Naive thymus-derived CD4-positive, alpha-beta T cell (primary cell): ENCODE measurements at regions of chrX and their contacts with region 1.

Region 1: GRCh38 chrX:129798888-129799287 is 19.1 kb downstream of the SASH3 start:
- DNase-seq: no peak
- ATAC-seq: peak; percentile 61
- H3K4me3 ChIP-seq: no peak overlapping the region
- H3K4me3 Mint-ChIP-seq: no peak overlapping the region
- H3K27ac ChIP-seq: no peak overlapping the region
- H3K27ac Mint-ChIP-seq: peak overlapping the region in 7 of 9 donors; percentile 37 to 69 (median 53)
- H3K4me1 ChIP-seq: no peaks in the 10 kb centered on the region
- H3K4me1 Mint-ChIP-seq: peaks cover 6 to 27% (median 19%) of the 10 kb centered on the region in 7 donors
- H3K27me3 ChIP-seq: no peaks in the 10 kb centered on the region
- H3K27me3 Mint-ChIP-seq: no peaks in the 10 kb centered on the region

Region 2: DNA sequence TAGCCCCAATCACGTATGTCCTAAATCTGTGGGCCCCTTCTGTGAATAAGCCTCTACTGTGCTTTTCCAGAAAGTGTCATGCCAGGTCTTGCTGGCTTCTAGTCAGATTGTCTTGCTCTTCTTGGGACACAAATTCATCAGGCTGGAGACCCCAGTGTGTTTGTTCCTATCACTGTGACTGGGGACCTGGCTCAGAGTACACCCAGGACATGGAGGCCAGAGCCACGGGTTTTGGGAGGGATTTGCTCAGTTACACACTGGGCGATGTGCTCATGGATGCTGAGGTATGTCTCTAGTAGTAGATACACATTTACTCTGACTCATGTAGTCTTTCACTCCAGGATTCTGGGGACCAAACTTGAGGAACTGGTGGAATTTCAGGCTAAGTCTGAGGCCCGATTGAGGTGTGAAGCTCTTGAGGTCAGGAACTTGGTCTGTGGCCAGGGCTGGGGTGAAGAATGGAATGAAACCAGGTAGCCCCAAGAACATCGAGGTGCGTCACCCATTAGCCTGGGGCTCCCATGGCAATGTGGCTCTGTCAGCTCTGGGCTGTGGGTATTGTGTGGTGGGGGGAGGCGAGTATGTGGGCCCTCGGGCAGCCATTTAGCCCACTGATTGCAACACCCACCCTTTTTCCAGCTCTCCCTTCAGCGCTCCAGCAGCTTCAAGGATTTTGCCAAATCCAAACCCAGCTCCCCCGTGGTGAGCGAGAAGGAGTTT is 11.4 kb before region 1 on chrX:
- CTCF ChIA-PET with region 1: interaction called, 3 read pairs
- POLR2A ChIA-PET with region 1: interaction called, 85 read pairs
- intact Hi-C with region 1: no loop called
- DNase-seq: no peak
- ATAC-seq: no peak
- H3K4me3 ChIP-seq: no peak overlapping the region
- H3K4me3 Mint-ChIP-seq: peak overlapping the region in 9 of 10 donors; percentile 38 to 79 (median 53)
- H3K27ac ChIP-seq: peak overlapping the region; percentile 45
- H3K27ac Mint-ChIP-seq: peak overlapping the region in 8 of 9 donors; percentile 57 to 92 (median 90)
- H3K4me1 ChIP-seq: peaks cover 27 to 31% of the 10 kb centered on the region in 2 donors
- H3K4me1 Mint-ChIP-seq: peaks cover 20 to 53% (median 45%) of the 10 kb centered on the region in 7 donors
- H3K27me3 ChIP-seq: no peaks in the 10 kb centered on the region
- H3K27me3 Mint-ChIP-seq: no peaks in the 10 kb centered on the region

Region 3: DNA sequence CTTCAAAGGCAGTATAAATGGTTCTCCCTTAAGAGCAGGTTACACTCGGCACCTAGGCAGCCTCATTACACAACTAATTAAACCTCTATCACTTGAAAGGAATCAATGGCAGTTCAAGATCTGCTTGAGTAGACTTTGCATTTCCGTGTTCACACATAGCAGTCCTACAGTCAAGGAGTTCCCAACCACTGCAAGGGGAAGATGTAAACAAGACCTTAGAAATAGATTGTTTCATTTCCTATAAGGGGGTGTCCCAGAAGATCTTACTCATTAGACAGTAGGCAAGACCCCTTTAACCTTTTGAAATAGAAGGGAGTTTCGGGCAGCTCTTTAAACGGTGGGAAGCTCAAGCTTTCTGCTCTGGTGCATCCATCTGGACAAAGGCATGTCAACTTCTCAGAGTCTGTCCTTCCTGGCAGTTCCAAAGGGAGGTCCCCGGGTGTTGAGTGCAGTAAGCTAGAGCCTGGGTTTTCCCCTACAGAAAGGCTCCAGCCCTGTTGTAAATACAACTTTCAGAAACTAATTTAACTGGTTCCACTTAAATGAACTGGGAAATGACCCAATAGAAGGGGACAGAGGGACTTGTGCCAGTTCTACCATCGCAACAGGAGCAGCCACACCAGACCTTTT is 753.7 kb after region 1 on chrX:
- CTCF ChIA-PET with region 1: no interaction called
- POLR2A ChIA-PET with region 1: no interaction called
- intact Hi-C with region 1: no loop called
- DNase-seq: no peak
- ATAC-seq: no peak
- H3K4me3 ChIP-seq: no peak overlapping the region
- H3K4me3 Mint-ChIP-seq: no peak overlapping the region
- H3K27ac ChIP-seq: no peak overlapping the region
- H3K27ac Mint-ChIP-seq: no peak overlapping the region
- H3K4me1 ChIP-seq: no peaks in the 10 kb centered on the region
- H3K4me1 Mint-ChIP-seq: no peaks in the 10 kb centered on the region
- H3K27me3 ChIP-seq: no peaks in the 10 kb centered on the region
- H3K27me3 Mint-ChIP-seq: peaks cover 4 to 25% (median 11%) of the 10 kb centered on the region in 5 donors